Ascending aorta (tissue), 2 donors: ENCODE measurements at regions of chr19 and their contacts with region 1.

Region 1: GRCh38 chr19:35716801-35717666 is 769 bp upstream of the KMT2B start:
- DNase-seq: peak; percentile 88 to 98
- H3K4me3 ChIP-seq: peak overlapping the region; percentile 79 to 95
- H3K27ac ChIP-seq: peak overlapping the region; percentile 85 to 86
- H3K4me1 ChIP-seq: peaks cover 7 to 19% of the 10 kb centered on the region in 2 donors
- H3K27me3 ChIP-seq: no peaks in the 10 kb centered on the region
- CTCF ChIP-seq: peak; percentile 92 to 95 (median 93)

Region 2: GRCh38 chr19:35509861-35510625 is 207.0 kb before region 1 on chr19:
- intact Hi-C with region 1: no loop called
- DNase-seq: peak in 1 of 2 donors; percentile 88
- H3K4me3 ChIP-seq: peak overlapping the region; percentile 49 to 67
- H3K27ac ChIP-seq: peak overlapping the region; percentile 46 to 59
- H3K4me1 ChIP-seq: no peaks in the 10 kb centered on the region
- H3K27me3 ChIP-seq: no peaks in the 10 kb centered on the region
- CTCF ChIP-seq: peak; percentile 82 to 96 (median 84)

Region 3: GRCh38 chr19:35545001-35545911 is 171.8 kb before region 1 on chr19 and contains the start of gene TMEM147:
- intact Hi-C with region 1: loop called (anchors 1 kb)
- DNase-seq: peak; percentile 65 to 96
- H3K4me3 ChIP-seq: peak within 1 kb of the TSS; percentile 87 to 88
- H3K27ac ChIP-seq: peak within 1 kb of the TSS; percentile 76 to 88
- H3K4me1 ChIP-seq: peaks cover 0 to 15% of the 10 kb centered on the region in 2 donors
- H3K27me3 ChIP-seq: no peaks in the 10 kb centered on the region
- CTCF ChIP-seq: no peak
- total RNA-seq, gene TMEM147: 99.7 TPM

Region 4: DNA sequence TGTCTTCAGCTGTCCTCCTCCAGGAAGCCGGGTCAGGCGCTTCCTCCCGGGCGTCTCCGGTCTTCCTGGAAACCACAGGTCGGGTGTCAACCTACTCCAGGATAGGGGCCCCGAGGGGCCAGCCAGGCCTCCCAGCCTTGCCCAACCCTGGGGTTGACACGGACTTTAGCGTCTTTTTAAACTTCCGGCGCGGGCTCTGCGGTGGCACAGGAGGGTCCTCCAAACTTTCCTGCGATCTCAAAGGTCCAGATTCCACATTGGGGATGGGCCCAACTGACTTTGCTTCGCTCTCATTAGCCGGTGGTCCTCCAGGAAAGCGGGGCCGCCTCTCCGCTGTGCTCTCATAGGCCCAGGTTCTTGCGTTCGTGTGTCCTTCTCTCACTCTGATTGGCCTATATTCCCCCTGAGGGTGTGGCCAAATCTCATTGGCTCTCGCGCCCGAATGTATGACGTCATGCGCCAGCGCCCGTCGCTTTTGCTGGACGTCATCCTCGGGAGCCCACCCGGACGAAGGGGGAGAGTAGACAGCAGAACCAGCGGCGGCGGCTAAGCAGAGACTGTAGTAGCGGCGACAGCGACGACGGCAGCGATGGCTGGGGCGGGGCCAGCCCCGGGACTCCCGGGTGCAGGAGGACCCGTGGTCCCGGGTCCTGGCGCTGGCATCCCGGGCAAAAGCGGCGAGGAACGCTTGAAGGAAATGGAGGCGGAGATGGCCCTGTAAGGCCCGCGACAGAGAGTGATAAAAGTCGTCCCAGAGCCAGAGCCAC is 88.3 kb before region 1 on chr19 and contains the start of gene RBM42:
- intact Hi-C with region 1: loop called (anchors 1 kb)
- DNase-seq: peak; percentile 95 to 99
- H3K4me3 ChIP-seq: peak within 1 kb of the TSS; percentile 74 to 97
- H3K27ac ChIP-seq: peak within 1 kb of the TSS; percentile 73 to 91
- H3K4me1 ChIP-seq: peaks cover 5 to 10% of the 10 kb centered on the region in 2 donors
- H3K27me3 ChIP-seq: no peaks in the 10 kb centered on the region
- CTCF ChIP-seq: no peak
- total RNA-seq, gene RBM42: 69.0 TPM

Region 5: DNA sequence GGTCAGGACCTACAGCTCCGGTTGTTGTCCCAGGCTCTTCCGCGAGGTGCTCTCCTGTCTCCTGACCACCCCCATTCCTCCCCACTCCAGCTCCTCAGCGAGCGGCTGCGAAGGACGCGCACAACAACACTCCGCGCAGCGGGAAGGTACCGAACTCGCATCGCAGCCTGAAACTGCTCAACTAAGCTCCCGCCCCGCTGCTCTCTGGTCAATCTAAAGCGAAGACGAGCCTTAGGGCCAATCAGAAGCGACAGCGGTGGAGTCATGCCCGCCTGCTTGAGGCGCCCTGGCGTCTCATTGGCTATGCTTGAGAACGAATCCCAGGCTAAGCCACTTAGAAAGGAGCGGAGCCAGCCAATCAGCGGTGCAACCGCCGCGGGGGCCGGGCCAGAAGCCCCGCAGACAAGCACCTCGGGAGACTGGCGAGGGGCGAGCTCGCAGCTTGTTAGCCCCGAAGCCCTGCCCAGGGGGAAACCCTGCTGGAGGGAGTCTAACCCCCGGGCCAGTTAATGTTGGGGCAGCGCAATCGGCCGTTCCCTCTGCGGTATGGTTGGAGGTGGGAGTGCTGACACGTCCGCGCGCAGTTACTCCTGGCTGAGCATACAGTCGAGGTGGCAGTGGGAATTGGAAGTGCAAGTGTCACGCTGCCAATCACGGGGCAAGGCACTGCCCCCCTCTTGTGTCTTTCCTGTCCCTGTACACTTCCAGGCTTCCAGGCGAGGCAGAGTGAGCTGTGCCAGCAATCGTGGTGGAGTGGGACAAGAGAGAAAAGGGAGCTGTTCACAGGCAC is 14.6 kb before region 1 on chr19:
- intact Hi-C with region 1: loop called (anchors 1 kb)
- DNase-seq: peak; percentile 94 to 98
- H3K4me3 ChIP-seq: peak overlapping the region; percentile 64 to 65
- H3K27ac ChIP-seq: no peak overlapping the region
- H3K4me1 ChIP-seq: peaks cover 2 to 3% of the 10 kb centered on the region in 2 donors
- H3K27me3 ChIP-seq: no peaks in the 10 kb centered on the region
- CTCF ChIP-seq: no peak

Region 6: DNA sequence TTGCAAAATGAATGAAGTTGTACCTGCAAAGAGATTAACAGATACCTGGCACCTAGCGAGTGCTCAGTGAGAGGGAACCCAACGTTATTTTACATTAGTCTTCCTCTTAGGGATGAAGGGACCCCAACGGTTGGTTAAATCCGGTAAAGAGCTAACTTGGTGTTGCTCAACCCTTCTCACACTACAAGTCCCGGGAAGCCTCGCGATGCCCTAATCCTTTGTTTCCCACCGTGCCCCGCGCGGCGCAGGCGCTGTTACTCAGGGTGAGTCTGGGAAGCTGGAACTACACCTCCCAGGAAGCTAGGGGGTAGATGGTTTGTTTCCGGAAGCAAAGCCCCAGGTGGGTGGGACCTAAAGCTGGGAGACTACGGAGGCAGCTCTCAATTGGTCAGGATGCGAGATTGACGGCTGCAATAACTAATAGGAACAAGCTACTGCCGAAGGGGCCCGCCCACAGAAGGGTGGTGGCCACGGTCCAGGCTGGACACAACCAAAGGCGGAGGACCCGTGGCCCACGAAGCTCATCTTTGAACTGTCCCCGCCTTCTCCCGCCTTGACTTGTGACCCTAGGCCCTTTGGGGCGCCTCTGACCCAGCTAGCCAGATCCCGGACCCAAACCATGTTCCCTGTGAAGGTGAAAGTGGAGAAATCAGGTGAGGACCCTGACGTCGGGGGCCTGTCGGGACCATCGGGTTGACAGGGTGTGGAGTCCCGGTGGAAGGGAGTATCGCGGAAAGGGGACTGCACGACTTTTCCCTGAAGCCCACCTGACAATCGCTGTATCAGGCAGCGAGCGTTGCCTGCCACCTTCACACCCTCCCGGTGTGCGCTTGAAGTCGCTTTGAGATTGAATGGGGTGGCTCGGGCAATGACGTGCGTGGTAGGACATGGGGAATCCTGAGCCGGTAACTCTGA is 31.3 kb after region 1 on chr19 and contains the start of gene LIN37:
- intact Hi-C with region 1: loop called (anchors 2 kb)
- DNase-seq: peak; percentile 99 to 100
- H3K4me3 ChIP-seq: peak within 1 kb of the TSS; percentile 82 to 91
- H3K27ac ChIP-seq: peak within 1 kb of the TSS; percentile 75 to 84
- H3K4me1 ChIP-seq: peaks cover 5 to 26% of the 10 kb centered on the region in 2 donors
- H3K27me3 ChIP-seq: no peaks in the 10 kb centered on the region
- CTCF ChIP-seq: no peak
- total RNA-seq, gene LIN37: 29.9 TPM

Region 7: GRCh38 chr19:35775298-35776110 is 58.5 kb after region 1 on chr19 and contains the start of gene ARHGAP33:
- intact Hi-C with region 1: loop called (anchors 2 kb)
- DNase-seq: peak; percentile 96 to 99
- H3K4me3 ChIP-seq: peak within 1 kb of the TSS; percentile 84 to 88
- H3K27ac ChIP-seq: peak within 1 kb of the TSS; percentile 59 to 61
- H3K4me1 ChIP-seq: peaks cover 5 to 14% of the 10 kb centered on the region in 2 donors
- H3K27me3 ChIP-seq: no peaks in the 10 kb centered on the region
- CTCF ChIP-seq: no peak
- total RNA-seq, gene ARHGAP33: 8.7 TPM